CD4-positive, alpha-beta T cell (primary cell): ENCODE measurements at regions of chr19 and their contacts with region 1.

Region 1: DNA sequence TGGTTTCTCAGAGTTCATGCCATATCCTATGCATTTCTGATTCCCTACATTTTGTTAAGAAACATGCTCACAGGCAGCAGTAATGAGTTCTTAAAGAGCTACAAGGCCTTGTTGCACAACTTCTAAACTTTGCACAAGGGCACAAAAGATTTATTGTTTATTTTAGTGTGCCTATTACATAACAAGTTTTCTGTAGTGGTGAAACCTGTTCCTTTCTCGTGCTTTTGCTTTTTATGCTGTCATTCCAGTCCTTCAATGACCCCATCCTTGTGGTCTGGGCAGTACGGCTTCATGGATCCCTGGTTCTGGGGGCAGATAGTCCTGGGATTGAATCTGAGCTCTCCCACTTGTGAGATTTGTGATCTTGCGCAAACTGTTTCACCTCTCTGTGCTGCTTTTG is 17.8 kb downstream of the ZNF507 start:
- DNase-seq: no peak
- ATAC-seq: no peak
- H3K4me3 ChIP-seq: no peak overlapping the region
- H3K4me3 Mint-ChIP-seq: no peak overlapping the region
- H3K27ac ChIP-seq: no peak overlapping the region
- H3K27ac Mint-ChIP-seq: peak overlapping the region; percentile 48
- H3K4me1 ChIP-seq: peaks cover 9% of the 10 kb centered on the region
- H3K4me1 Mint-ChIP-seq: peaks cover 85% of the 10 kb centered on the region
- H3K27me3 ChIP-seq: no peaks in the 10 kb centered on the region
- H3K27me3 Mint-ChIP-seq: no peaks in the 10 kb centered on the region
- CTCF ChIP-seq: no peak

Region 2: DNA sequence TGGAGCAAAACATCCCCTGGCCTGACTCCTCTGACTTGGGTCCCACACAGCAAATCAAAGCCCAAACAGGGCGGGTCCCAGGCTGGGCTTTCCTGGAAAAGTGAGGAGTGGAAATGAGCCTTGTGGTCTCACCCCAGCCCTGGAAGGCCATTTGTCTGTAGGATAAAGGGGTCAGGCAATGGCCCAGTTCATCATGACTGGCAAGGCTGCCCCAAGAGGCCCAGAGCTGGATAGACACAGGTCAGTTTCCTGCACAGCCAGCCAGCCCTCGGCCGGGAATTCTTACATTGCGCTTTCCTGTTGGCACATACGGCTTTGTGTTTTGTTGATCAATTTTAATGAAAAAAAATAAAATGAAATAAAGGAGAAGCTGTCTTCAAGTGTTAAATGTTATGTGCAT is 1188.2 kb before region 1 on chr19:
- CTCF ChIA-PET with region 1: no interaction called
- POLR2A ChIA-PET with region 1: no interaction called
- intact Hi-C with region 1: loop called in 1 of 2 experiments (anchors 5 kb)
- DNase-seq: no peak
- ATAC-seq: no peak
- H3K4me3 ChIP-seq: no peak overlapping the region
- H3K4me3 Mint-ChIP-seq: no peak overlapping the region
- H3K27ac ChIP-seq: no peak overlapping the region
- H3K27ac Mint-ChIP-seq: no peak overlapping the region
- H3K4me1 ChIP-seq: no peaks in the 10 kb centered on the region
- H3K4me1 Mint-ChIP-seq: no peaks in the 10 kb centered on the region
- H3K27me3 ChIP-seq: peaks cover 3 to 5% of the 10 kb centered on the region in 2 experiments
- H3K27me3 Mint-ChIP-seq: peaks cover 16% of the 10 kb centered on the region
- CTCF ChIP-seq: no peak